ENCODE measurements at regions of chr11 and their contacts with region 1.

Region 1: DNA sequence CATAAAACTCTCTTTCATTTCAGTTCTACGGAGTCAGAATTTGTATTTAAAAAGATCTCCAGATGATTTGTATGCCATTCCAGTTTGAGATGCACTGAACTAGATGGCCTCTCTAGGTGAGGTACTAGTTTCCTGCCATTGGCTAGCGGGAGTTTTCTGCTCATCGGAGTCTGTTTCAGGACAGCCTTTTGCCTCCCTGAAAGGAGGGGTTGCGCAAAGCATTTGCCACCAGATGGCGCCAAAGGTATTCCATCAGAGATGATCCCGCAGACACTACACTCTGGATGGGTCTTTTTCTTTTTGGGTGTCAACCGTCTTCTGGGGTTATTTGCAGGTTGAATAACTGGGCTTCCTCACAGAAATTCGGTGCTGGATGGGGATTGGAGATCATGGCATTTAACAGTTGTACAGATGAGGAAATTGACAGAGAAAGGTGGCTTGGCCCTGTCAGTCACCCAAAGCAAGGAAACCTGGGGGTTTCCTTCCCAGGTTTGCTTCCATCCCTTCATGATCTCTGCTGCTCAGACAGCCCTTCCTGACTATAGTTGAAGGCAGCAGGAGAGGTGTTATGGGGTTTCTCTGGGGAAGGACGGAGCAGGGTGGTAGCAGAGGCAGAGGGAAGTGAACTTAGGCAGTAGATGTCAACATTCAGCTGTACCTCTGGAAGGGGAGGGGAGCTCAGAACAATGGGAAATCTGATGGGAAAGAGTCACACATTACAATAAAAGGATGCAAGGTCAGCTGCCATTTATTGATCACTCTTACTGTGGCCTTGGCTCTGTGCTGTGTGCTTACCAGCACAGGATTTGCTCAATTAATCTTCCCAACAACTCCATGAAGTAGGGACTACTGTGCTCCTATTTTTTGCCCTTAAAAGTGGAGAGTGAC is 81.6 kb downstream of the CCDC81 start:
- DNase-seq: peak; percentile 83 to 89 (median 86)
- ATAC-seq: peak; percentile 71
- H3K4me3 ChIP-seq: no peak overlapping the region
- H3K27ac ChIP-seq: peak overlapping the region; percentile 5 to 73 (median 30)
- H3K4me1 ChIP-seq: peaks cover 32% of the 10 kb centered on the region
- H3K27me3 ChIP-seq: no peaks in the 10 kb centered on the region
- CTCF ChIP-seq: peak; percentile 74 to 93 (median 90)
- POLR2A ChIP-seq: no peak

Region 2: DNA sequence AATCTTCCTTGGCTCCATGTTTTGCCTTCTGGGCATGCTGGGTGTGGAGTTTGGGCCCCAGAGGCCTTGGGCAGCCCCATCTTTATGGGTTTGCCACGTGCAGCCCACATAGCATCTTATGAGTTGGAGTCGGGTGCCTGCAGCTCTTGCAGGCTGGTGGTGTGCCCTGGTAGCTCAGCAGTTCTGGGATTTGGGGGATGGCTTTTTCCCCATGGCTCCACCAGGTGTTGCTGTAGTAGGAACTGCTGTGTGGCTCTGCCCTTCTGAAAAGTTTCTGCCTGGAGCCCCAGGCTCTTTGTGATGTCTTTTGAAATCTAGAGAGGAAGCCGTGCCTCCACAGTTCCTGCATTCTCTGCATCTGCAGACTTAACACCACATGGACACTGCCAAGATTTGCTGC is 195.0 kb before region 1 on chr11:
- intact Hi-C with region 1: no loop called
- DNase-seq: no peak
- ATAC-seq: no peak
- H3K4me3 ChIP-seq: no peak overlapping the region
- H3K27ac ChIP-seq: no peak overlapping the region
- H3K4me1 ChIP-seq: no peaks in the 10 kb centered on the region
- H3K27me3 ChIP-seq: no peaks in the 10 kb centered on the region
- CTCF ChIP-seq: no peak
- POLR2A ChIP-seq: no peak

Region 3: DNA sequence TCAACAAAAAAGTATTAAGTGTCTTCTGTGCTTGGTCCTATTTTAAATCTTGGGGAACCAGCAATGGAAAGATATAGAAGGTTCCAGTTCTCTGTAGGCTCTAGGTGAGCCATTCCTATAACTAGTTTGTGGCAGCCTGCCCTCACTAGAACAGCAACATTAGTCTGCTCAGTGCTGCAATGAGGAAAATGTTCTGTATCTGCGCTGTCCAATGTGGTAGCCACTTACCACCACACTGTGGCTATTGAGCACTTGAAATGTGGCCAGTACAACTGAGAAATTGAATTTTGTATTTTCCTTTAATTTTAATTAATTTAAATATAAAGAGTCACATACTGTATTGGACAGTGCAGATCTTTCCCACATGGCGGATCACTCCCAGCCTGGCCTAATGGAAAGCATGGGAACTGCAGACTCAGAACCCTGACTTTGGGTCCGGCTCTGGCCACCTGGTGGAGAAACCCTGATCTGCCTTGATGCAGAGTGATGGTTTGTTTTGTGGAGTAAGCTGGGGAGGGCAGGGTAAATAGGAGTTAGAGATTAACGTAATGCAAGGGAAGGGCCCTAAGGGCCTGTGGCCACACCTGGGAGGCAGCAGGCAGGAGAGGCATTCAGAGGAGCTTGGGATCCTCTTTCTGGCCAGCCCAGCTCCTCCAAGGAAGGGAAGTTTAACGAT is 115.1 kb after region 1 on chr11:
- intact Hi-C with region 1: no loop called
- DNase-seq: no peak
- ATAC-seq: no peak
- H3K4me3 ChIP-seq: no peak overlapping the region
- H3K27ac ChIP-seq: no peak overlapping the region
- H3K4me1 ChIP-seq: peaks cover 27% of the 10 kb centered on the region
- H3K27me3 ChIP-seq: no peaks in the 10 kb centered on the region
- CTCF ChIP-seq: peak in 1 of 7 experiments; percentile 14
- POLR2A ChIP-seq: no peak

Region 4: GRCh38 chr11:86610559-86611341 is 154.5 kb after region 1 on chr11:
- intact Hi-C with region 1: loop called (anchors 10 kb)
- DNase-seq: no peak
- ATAC-seq: no peak
- H3K4me3 ChIP-seq: no peak overlapping the region
- H3K27ac ChIP-seq: no peak overlapping the region
- H3K4me1 ChIP-seq: peaks cover 19% of the 10 kb centered on the region
- H3K27me3 ChIP-seq: no peaks in the 10 kb centered on the region
- CTCF ChIP-seq: no peak
- POLR2A ChIP-seq: no peak

Region 5: DNA sequence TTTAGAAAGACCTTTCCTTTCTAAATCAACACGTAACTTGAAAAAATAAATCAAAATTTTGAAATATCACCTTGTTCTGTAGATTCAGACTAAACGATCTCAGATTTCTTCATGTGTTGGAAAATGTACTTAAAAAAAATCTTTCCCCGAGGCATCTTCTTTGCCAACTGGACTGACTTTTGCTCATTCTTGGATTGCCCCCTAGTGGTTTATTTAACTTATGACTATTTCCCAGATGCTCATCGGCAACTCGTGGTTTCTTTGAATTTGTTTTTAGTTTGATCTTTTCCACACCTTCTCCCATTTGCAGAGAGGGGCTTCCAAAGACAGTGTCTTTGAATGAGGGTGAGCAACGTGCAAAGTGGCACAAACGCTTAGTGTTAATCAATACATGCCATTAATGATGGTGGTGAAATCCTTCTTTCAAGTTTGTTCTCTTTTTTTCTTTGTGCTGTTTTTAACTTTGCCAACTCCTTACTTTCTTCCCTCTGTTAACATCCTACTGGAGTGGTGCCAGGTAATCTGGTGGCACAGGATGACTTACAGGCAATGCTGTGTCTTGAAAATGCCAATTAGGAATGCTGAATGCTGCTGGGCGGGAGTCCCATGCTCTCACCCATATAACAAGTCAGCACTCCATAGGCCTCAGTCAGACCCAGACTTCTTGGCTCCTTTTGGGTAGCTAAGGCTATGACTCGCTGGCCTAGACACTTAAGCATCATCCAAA is 362.3 kb after region 1 on chr11:
- intact Hi-C with region 1: loop called (anchors 5 kb)
- DNase-seq: peak in 1 of 4 donors; percentile 33
- ATAC-seq: peak; percentile 75
- H3K4me3 ChIP-seq: no peak overlapping the region
- H3K27ac ChIP-seq: no peak overlapping the region
- H3K4me1 ChIP-seq: peaks cover 7% of the 10 kb centered on the region
- H3K27me3 ChIP-seq: no peaks in the 10 kb centered on the region
- CTCF ChIP-seq: peak; percentile 23 to 88 (median 81)
- POLR2A ChIP-seq: no peak

Measured in body of pancreas (tissue), 4 donors.